Activated T-helper 2 cell treated with anti-CD3 and anti-CD28 coated beads, Interferon-gamma antibody, Interleukin-2, Interleukin-4, amounts not matched to agents 10 μg/mL and 5 μg/mL and 100 μg/mL, durations not matched to agents 14 hours and 24 hours and 36 hours (primary cell): ENCODE measurements at regions of chr21 and their contacts with region 1.

Region 1: GRCh38 chr21:32914424-32915039 is 111.2 kb upstream of the OLIG2 start:
- DNase-seq: no peak
- H3K4me3 Mint-ChIP-seq: no peak overlapping the region
- H3K27ac Mint-ChIP-seq: no peak overlapping the region
- H3K4me1 Mint-ChIP-seq: peaks cover 19% of the 10 kb centered on the region
- H3K27me3 Mint-ChIP-seq: peaks cover 31% of the 10 kb centered on the region

Region 2: GRCh38 chr21:32929633-32930038 is 15.1 kb after region 1 on chr21:
- intact Hi-C with region 1: loop called (anchors 2 kb)
- DNase-seq: no peak
- H3K4me3 Mint-ChIP-seq: no peak overlapping the region
- H3K27ac Mint-ChIP-seq: no peak overlapping the region
- H3K4me1 Mint-ChIP-seq: peaks cover 31% of the 10 kb centered on the region
- H3K27me3 Mint-ChIP-seq: no peaks in the 10 kb centered on the region

Region 3: DNA sequence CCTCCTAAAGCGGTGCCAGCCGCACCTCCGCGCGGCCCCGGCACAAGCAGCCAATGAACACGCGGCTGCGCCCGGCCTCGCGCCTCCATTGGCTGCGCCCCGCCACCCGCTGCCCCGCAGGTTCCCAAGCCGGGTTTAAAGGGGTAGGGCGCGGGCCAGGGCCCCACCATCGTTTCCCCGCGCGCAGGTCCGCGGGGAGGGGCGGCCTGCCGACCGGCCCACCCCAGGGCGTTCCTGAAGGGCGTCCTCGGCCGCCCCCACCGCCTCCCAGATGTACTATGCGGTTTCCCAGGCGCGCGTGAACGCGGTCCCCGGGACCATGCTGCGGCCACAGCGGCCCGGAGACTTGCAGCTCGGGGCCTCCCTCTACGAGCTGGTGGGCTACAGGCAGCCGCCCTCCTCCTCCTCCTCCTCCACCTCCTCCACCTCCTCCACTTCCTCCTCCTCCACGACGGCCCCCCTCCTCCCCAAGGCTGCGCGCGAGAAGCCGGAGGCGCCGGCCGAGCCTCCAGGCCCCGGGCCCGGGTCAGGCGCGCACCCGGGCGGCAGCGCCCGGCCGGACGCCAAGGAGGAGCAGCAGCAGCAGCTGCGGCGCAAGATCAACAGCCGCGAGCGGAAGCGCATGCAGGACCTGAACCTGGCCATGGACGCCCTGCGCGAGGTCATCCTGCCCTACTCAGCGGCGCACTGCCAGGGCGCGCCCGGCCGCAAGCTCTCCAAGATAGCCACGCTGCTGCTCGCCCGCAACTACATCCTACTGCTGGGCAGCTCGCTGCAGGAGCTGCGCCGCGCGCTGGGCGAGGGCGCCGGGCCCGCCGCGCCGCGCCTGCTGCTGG is 155.7 kb after region 1 on chr21 and contains the start of gene OLIG1:
- intact Hi-C with region 1: no loop called
- DNase-seq: peak; percentile 16
- H3K4me3 Mint-ChIP-seq: peak within 1 kb of the TSS; percentile 67
- H3K27ac Mint-ChIP-seq: no peak within 1 kb of the TSS
- H3K4me1 Mint-ChIP-seq: peaks cover 13% of the 10 kb centered on the region
- H3K27me3 Mint-ChIP-seq: peaks cover 79% of the 10 kb centered on the region
- total RNA-seq, gene OLIG1: 0.09 TPM in 1 of 2 replicates, not detected in the other